CD4-positive, alpha-beta T cell (primary cell): ENCODE measurements at regions of chr10 and their contacts with region 1.

Region 1: DNA sequence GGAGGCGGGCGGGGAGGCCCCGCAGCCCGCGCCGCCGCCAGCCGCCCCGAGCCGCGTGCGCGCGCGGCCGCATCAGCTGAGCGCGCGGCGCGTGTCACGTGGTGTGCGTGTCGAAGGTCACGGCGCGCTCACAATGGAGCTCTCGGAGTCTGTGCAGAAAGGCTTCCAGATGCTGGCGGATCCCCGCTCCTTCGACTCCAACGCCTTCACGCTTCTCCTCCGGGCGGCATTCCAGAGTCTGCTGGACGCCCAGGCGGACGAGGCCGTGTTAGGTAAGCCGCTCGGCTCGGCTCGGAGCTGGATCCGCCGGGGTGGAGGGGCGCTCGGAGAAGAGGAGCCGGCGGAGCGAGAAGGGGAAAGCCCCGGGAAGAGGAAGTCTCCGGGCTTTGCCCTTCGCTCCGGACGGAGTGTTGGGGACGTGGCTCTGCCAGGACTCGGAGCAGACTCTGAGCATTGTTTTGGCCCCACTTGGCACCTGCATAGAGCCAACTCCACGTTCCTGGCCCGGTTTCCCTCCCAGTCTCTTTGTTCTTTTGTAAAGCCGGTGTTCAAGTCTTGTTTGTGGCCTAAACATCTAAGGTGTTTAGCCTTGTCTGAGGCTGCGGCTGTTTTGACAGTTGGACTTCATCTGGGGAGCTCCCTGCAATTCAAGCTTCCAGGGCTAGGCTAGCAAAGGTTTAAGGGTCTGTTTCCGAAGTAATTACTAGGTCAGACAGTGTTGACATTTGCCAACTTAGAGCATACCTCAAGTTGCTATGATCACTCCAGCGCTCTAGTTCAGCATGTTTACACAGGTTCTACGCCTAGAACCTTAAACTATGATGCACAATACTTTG is at the start of gene COMMD3:
- DNase-seq: peak; percentile 59 to 94 (median 74)
- ATAC-seq: peak; percentile 55
- H3K4me3 ChIP-seq: peak within 1 kb of the TSS; percentile 82
- H3K4me3 Mint-ChIP-seq: peak within 1 kb of the TSS; percentile 95
- H3K27ac ChIP-seq: peak within 1 kb of the TSS; percentile 71 to 74
- H3K27ac Mint-ChIP-seq: peak within 1 kb of the TSS; percentile 90
- H3K4me1 ChIP-seq: peaks cover 17% of the 10 kb centered on the region
- H3K4me1 Mint-ChIP-seq: peaks cover 42% of the 10 kb centered on the region
- H3K27me3 ChIP-seq: peaks cover 0 to 5% of the 10 kb centered on the region in 2 experiments
- H3K27me3 Mint-ChIP-seq: peaks cover 26% of the 10 kb centered on the region
- CTCF ChIP-seq: no peak
- total RNA-seq, gene COMMD3: 43.2 to 51.0 TPM

Region 2: GRCh38 chr10:21525367-21526183 is 790.9 kb before region 1 on chr10 and contains the start of gene SKIDA1:
- CTCF ChIA-PET with region 1: no interaction called
- POLR2A ChIA-PET with region 1: interaction called, 12 read pairs
- intact Hi-C with region 1: loop called in 1 of 2 experiments (anchors 5 kb)
- DNase-seq: peak in 13 of 14 experiments; percentile 33 to 83 (median 50)
- ATAC-seq: peak; percentile 79
- H3K4me3 ChIP-seq: peak within 1 kb of the TSS; percentile 80
- H3K4me3 Mint-ChIP-seq: peak within 1 kb of the TSS; percentile 98
- H3K27ac ChIP-seq: peak within 1 kb of the TSS; percentile 61 to 66
- H3K27ac Mint-ChIP-seq: peak within 1 kb of the TSS; percentile 86
- H3K4me1 ChIP-seq: peaks cover 25% of the 10 kb centered on the region
- H3K4me1 Mint-ChIP-seq: peaks cover 37% of the 10 kb centered on the region
- H3K27me3 ChIP-seq: peaks cover 5 to 26% of the 10 kb centered on the region in 2 experiments
- H3K27me3 Mint-ChIP-seq: peaks cover 36% of the 10 kb centered on the region
- CTCF ChIP-seq: no peak
- total RNA-seq, gene SKIDA1: 0.22 to 0.25 TPM

Region 3: DNA sequence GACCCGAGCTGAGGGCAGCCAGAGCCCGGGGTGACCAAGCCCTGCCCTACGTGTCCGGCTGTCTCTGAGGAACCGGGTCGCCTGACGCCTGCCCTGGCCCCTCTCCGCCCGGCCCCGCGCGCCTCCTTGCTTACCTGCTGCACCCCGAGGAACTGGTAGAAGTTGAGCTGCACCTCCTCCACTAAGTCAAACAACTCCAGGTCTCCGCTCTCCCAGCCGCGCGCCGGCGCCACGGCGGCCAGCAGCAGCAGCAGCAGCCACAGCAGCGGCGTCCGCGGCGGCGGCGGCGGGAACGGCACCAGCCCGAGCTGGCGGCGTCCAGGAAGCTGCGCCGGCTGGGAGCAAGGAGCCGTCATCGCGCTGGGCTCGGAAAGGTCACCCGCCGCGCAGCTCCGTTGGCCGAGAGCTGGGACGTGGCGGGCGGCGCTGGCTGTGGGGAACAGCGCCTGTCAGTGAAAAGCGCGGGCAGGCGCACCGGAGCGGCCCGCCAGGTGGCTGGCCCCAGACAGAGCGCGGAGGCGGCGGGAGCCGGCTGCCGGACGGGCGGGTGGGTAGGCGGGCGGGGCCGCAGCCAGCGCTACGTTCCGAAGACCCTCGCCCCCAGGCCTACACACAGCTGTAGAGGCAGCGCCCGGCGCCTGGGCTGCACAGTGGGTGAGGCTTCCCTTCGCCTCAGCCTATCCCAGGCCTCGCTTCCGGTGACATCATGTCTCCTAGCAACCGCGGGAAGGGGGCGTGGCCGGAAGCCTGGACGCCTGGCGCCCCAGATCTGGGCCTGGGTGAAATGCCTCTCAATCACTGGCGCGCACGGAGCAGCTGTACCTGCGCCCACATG is 313.2 kb before region 1 on chr10 and contains the start of gene DNAJC1:
- CTCF ChIA-PET with region 1: no interaction called
- POLR2A ChIA-PET with region 1: interaction called, 13 read pairs
- intact Hi-C with region 1: loop called (anchors 5 kb)
- DNase-seq: peak; percentile 96 to 99 (median 98)
- ATAC-seq: peak; percentile 91
- H3K4me3 ChIP-seq: peak within 1 kb of the TSS; percentile 91
- H3K4me3 Mint-ChIP-seq: peak within 1 kb of the TSS; percentile 95
- H3K27ac ChIP-seq: peak within 1 kb of the TSS; percentile 75 to 79
- H3K27ac Mint-ChIP-seq: peak within 1 kb of the TSS; percentile 84
- H3K4me1 ChIP-seq: peaks cover 12% of the 10 kb centered on the region
- H3K4me1 Mint-ChIP-seq: peaks cover 28% of the 10 kb centered on the region
- H3K27me3 ChIP-seq: no peaks in the 10 kb centered on the region
- H3K27me3 Mint-ChIP-seq: no peaks in the 10 kb centered on the region
- CTCF ChIP-seq: no peak
- total RNA-seq, gene DNAJC1: 16.8 to 19.3 TPM

Region 4: GRCh38 chr10:22251751-22252223 is 64.7 kb before region 1 on chr10:
- CTCF ChIA-PET with region 1: interaction called, 3 read pairs
- POLR2A ChIA-PET with region 1: interaction called, 46 read pairs
- intact Hi-C with region 1: loop called (anchors 5 kb)
- DNase-seq: peak; percentile 46 to 82 (median 66)
- ATAC-seq: peak; percentile 57
- H3K4me3 ChIP-seq: peak overlapping the region; percentile 76
- H3K4me3 Mint-ChIP-seq: peak overlapping the region; percentile 96
- H3K27ac ChIP-seq: peak overlapping the region; percentile 71 to 76
- H3K27ac Mint-ChIP-seq: peak overlapping the region; percentile 97
- H3K4me1 ChIP-seq: peaks cover 10% of the 10 kb centered on the region
- H3K4me1 Mint-ChIP-seq: peaks cover 56% of the 10 kb centered on the region
- H3K27me3 ChIP-seq: peaks cover 0 to 7% of the 10 kb centered on the region in 2 experiments
- H3K27me3 Mint-ChIP-seq: peaks cover 22% of the 10 kb centered on the region
- CTCF ChIP-seq: no peak

Region 5: GRCh38 chr10:22335173-22336123 is 18.9 kb after region 1 on chr10:
- CTCF ChIA-PET with region 1: no interaction called
- POLR2A ChIA-PET with region 1: interaction called, 24 read pairs
- intact Hi-C with region 1: loop called in 1 of 2 experiments (anchors 2 kb)
- DNase-seq: peak in 13 of 14 experiments; percentile 46 to 93 (median 67)
- ATAC-seq: peak; percentile 87
- H3K4me3 ChIP-seq: peak overlapping the region; percentile 52
- H3K4me3 Mint-ChIP-seq: peak overlapping the region; percentile 93
- H3K27ac ChIP-seq: peak overlapping the region in 1 of 2 donors; percentile 30
- H3K27ac Mint-ChIP-seq: peak overlapping the region; percentile 96
- H3K4me1 ChIP-seq: peaks cover 46% of the 10 kb centered on the region
- H3K4me1 Mint-ChIP-seq: peaks cover 48% of the 10 kb centered on the region
- H3K27me3 ChIP-seq: peaks cover 35 to 65% of the 10 kb centered on the region in 2 experiments
- H3K27me3 Mint-ChIP-seq: peaks cover 67% of the 10 kb centered on the region
- CTCF ChIP-seq: no peak

Region 6: DNA sequence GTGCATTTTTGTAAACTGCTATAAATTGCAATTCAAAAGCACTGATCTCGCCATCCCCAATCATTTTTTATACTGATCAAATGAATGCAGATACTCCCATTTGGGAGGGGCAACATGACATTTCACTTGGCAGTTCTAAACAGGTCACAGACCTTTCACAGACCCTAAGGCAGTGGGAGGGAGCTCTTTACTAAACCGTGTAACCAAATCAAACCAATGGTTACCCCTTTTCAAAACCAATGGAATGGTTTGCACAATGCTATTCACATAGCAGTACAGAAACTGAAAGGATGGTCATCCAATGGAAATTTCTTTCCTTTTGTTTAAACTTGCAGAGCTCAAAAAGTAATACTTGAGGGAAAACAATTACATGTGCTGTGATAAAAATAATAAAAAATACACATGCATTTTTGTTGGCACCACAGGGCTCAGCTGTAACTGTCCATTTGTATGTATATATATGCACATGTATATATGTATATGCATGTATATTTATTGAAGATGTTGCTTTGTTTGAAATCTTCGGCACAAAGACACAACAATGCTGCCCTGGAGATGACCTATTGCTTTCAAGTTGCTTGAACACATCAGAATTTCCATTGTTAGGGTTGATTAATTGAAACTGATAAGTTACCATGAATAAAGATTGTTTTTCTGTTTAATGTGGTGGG is 889.6 kb after region 1 on chr10:
- CTCF ChIA-PET with region 1: no interaction called
- POLR2A ChIA-PET with region 1: no interaction called
- intact Hi-C with region 1: no loop called
- DNase-seq: no peak
- ATAC-seq: no peak
- H3K4me3 ChIP-seq: no peak overlapping the region
- H3K4me3 Mint-ChIP-seq: no peak overlapping the region
- H3K27ac ChIP-seq: no peak overlapping the region
- H3K27ac Mint-ChIP-seq: no peak overlapping the region
- H3K4me1 ChIP-seq: no peaks in the 10 kb centered on the region
- H3K4me1 Mint-ChIP-seq: no peaks in the 10 kb centered on the region
- H3K27me3 ChIP-seq: peaks cover 27 to 36% of the 10 kb centered on the region in 2 experiments
- H3K27me3 Mint-ChIP-seq: peaks cover 79% of the 10 kb centered on the region
- CTCF ChIP-seq: no peak